HepG2 (cell line): ENCODE measurements at regions of chr2 and their contacts with region 1.

Region 1: GRCh38 chr2:18378020-18378653 is 182.3 kb downstream of the RDH14 start:
- DNase-seq: peak; percentile 49
- ATAC-seq: peak; percentile 92
- H3K4me3 ChIP-seq: no peak overlapping the region
- H3K27ac ChIP-seq: no peak overlapping the region
- H3K4me1 ChIP-seq: no peaks in the 10 kb centered on the region
- H3K27me3 ChIP-seq: no peaks in the 10 kb centered on the region
- CTCF ChIP-seq: peak; percentile 85
- EP300 ChIP-seq: no peak
- POLR2A ChIP-seq: no peak
- RAD21 ChIP-seq: 0 out of 2 replicates have a peak, but pooled peaks have one; percentile 26

Region 2: GRCh38 chr2:17719562-17720371 is 658.4 kb before region 1 on chr2:
- CTCF ChIA-PET with region 1: interaction called, 7 read pairs
- POLR2A ChIA-PET with region 1: no interaction called
- in situ Hi-C with region 1: loop called (anchors 10 kb)
- intact Hi-C with region 1: loop called (anchors 5 kb)
- DNase-seq: no peak
- ATAC-seq: peak; percentile 59
- H3K4me3 ChIP-seq: no peak overlapping the region
- H3K27ac ChIP-seq: no peak overlapping the region
- H3K4me1 ChIP-seq: no peaks in the 10 kb centered on the region
- H3K27me3 ChIP-seq: no peaks in the 10 kb centered on the region
- CTCF ChIP-seq: peak; percentile 65
- EP300 ChIP-seq: no peak
- POLR2A ChIP-seq: no peak
- RAD21 ChIP-seq: no peak

Region 3: DNA sequence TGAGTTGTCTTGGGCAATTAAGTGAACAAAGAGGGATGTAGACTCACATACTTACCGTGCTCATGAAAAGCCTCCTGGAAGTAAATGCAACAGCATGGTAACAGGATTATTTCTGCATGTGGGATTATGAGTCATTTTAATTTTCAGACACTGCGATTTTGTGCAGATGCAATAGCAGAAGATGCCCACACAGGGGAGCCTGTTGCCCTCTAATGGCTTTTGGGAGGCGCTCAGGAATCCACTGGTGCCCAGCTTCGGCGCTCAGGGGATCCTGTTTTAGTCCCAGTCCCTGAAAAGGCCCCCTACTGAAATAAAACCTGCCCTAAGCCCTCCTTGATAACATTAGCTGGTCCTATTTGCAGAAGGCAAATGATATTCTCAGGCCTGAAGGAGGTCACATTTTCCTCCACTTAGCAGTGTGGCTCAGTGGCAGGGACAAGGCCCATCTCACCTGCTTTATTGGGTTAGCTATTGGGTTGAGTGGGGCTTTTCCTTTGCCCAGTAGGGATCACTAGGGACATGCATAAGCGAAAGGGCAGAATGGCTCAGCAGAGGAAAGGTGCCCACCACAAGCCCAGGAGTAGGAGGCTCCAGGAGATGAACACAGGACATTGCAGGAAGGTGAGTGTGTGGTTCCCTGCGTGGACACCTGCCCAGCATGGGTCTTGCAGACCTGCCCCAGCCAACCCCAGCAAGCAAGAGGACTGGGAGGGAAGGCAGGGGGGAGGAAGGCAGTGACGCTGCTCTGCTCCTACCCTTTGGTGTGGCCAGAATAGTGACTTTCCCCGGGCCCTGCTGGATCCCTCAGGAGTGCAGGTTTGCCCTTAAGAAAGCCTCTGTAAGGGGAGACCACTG is 526.2 kb before region 1 on chr2:
- CTCF ChIA-PET with region 1: interaction called, 34 read pairs
- POLR2A ChIA-PET with region 1: no interaction called
- in situ Hi-C with region 1: loop called (anchors 5 kb)
- intact Hi-C with region 1: loop called (anchors 1 kb)
- DNase-seq: peak; percentile 45
- ATAC-seq: peak; percentile 90
- H3K4me3 ChIP-seq: no peak overlapping the region
- H3K27ac ChIP-seq: no peak overlapping the region
- H3K4me1 ChIP-seq: no peaks in the 10 kb centered on the region
- H3K27me3 ChIP-seq: peaks cover 0 to 4% of the 10 kb centered on the region in 2 experiments; a peak in 2 of 5 replicates
- CTCF ChIP-seq: peak; percentile 86
- EP300 ChIP-seq: no peak
- POLR2A ChIP-seq: no peak
- RAD21 ChIP-seq: peak; percentile 86

Region 4: GRCh38 chr2:18149645-18150246 is 228.4 kb before region 1 on chr2:
- CTCF ChIA-PET with region 1: interaction called, 3 read pairs
- POLR2A ChIA-PET with region 1: no interaction called
- in situ Hi-C with region 1: no loop called
- intact Hi-C with region 1: loop called (anchors 1 kb)
- DNase-seq: peak; percentile 31
- ATAC-seq: peak; percentile 71
- H3K4me3 ChIP-seq: no peak overlapping the region
- H3K27ac ChIP-seq: no peak overlapping the region
- H3K4me1 ChIP-seq: no peaks in the 10 kb centered on the region
- H3K27me3 ChIP-seq: no peaks in the 10 kb centered on the region
- CTCF ChIP-seq: peak; percentile 73
- EP300 ChIP-seq: no peak
- POLR2A ChIP-seq: no peak
- RAD21 ChIP-seq: no peak

Region 5: DNA sequence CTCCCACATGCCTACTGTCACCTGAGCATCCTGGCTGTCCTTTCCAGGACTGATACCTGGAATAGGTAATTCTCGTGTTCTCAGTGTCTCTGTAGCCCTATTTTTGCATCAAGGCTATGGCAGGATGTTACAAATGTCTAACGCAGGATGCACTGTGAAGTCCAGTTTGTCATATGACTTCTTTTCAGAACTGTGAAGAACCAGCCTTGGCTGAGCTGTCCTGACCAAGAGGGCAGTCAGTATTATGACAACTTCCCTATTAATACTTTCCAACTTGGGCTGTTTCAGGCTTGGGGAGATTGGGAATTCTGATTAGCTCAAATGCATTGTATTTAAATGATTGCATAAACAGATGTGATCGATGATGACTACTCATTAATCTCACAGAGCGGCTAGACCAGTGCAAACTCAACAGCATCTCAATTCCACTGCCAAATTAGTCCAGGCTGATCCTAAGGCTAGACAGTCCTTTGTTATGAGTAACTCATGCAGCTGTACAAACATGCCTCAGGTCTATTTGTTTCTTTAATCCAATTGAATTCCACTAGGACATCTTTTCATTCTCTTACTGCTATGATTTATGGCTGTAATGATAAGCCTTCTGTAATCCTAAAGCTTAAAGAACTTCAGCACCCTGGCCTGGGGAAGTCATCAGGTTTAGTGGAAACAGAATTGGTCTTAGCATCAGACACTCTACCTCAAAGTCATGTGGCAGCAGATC is 168.1 kb before region 1 on chr2:
- CTCF ChIA-PET with region 1: no interaction called
- POLR2A ChIA-PET with region 1: no interaction called
- in situ Hi-C with region 1: no loop called
- intact Hi-C with region 1: loop called (anchors 10 kb)
- DNase-seq: no peak
- ATAC-seq: no peak
- H3K4me3 ChIP-seq: no peak overlapping the region
- H3K27ac ChIP-seq: no peak overlapping the region
- H3K4me1 ChIP-seq: no peaks in the 10 kb centered on the region
- H3K27me3 ChIP-seq: no peaks in the 10 kb centered on the region
- CTCF ChIP-seq: no peak
- EP300 ChIP-seq: no peak
- POLR2A ChIP-seq: no peak
- RAD21 ChIP-seq: no peak

Region 6: DNA sequence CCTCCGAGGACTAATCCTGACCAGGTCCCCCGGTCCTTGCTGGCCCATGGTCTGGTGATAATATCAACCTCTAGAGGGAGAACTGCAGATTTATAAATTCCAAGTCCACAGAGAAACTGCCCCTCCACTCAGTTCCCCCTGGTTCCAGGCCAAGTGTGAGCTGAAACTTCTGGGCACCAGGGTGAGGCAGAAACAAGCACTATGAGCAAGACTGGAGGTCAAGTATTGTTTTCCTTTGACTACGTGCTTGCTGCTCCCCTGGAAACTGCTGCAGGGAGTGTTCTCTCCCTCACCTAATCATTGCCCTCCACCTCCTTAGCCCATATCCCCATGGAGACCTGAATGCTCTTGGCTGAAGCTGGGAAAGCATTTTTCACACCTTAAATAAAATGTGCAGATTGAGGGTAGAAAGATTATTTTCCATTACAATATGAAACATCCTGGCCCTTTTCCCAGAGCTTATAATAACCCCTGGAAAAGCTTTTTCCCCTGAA is 47.1 kb after region 1 on chr2:
- CTCF ChIA-PET with region 1: no interaction called
- POLR2A ChIA-PET with region 1: no interaction called
- in situ Hi-C with region 1: no loop called
- intact Hi-C with region 1: no loop called
- DNase-seq: no peak
- ATAC-seq: peak; percentile 57
- H3K4me3 ChIP-seq: no peak overlapping the region
- H3K27ac ChIP-seq: no peak overlapping the region
- H3K4me1 ChIP-seq: no peaks in the 10 kb centered on the region
- H3K27me3 ChIP-seq: no peaks in the 10 kb centered on the region; a peak in 1 of 5 replicates
- CTCF ChIP-seq: no peak
- EP300 ChIP-seq: no peak
- POLR2A ChIP-seq: no peak
- RAD21 ChIP-seq: no peak

Region 7: DNA sequence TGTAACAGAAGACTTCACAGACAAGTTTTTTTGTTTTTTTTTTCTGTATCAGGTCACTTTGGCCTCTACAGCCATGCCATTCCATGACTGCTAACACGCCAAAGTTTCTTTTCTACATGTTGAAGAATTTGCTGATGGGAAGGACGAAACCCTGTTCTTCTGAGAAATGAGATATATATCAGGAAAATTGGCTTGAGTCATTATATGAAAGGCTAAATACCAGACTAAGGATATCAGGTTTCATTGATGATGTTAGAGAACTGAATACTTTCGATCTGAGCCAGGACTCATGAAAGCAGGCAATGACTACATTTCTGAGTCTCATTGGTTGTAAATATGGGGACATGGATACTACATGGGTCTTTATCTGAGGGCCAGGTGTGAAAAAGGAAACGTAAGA is 798.8 kb after region 1 on chr2:
- CTCF ChIA-PET with region 1: no interaction called
- POLR2A ChIA-PET with region 1: no interaction called
- in situ Hi-C with region 1: no loop called
- intact Hi-C with region 1: loop called (anchors 5 kb)
- DNase-seq: no peak
- ATAC-seq: no peak
- H3K4me3 ChIP-seq: no peak overlapping the region
- H3K27ac ChIP-seq: no peak overlapping the region
- H3K4me1 ChIP-seq: no peaks in the 10 kb centered on the region
- H3K27me3 ChIP-seq: no peaks in the 10 kb centered on the region
- CTCF ChIP-seq: no peak
- EP300 ChIP-seq: no peak
- POLR2A ChIP-seq: no peak
- RAD21 ChIP-seq: no peak